B cell (primary cell): ENCODE measurements at regions of chr22 and their contacts with region 1.

Region 1: DNA sequence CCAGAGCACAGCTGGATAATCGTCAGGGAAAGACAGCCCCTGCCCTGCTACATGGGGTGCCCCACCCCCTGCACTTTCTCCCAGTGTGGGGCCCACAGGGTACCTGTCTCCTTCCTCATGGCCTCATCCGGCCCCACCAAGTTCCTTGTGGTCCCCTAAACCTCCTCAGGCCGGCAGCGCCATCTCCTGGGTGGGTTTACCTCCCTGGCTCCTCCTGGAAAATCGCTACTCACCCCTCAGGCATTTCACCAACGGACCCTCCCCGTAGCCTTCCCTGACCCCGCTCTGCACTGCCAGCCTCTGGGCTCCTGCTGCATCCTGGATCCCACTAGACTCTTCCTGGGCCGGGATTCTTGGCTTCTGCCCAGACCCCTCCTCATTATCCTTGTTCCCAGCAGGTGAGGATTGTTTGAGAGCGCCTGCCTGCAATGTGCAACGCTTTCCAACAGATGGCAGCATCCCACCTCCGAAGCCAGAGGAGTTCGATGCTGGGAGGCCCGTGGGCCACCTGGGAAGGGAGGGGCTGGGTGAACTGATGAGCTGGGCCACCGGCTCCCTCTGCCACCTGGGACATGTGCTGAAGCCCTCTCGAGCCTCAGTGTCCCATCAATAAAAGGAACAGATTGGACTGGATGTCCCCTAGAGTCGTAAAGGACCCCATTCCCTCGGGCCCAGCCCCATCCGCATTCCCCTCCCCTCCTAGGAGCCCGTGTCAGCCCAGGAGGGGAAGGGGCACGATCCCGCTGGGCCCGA is 44.2 kb upstream of the TTLL12 start:
- DNase-seq: peak; percentile 72
- ATAC-seq: peak; percentile 69
- H3K4me3 ChIP-seq: no peak overlapping the region
- H3K4me3 Mint-ChIP-seq: no peak overlapping the region
- H3K27ac ChIP-seq: no peak overlapping the region
- H3K27ac Mint-ChIP-seq: no peak overlapping the region
- H3K4me1 ChIP-seq: peaks cover 4 to 7% of the 10 kb centered on the region in 2 donors
- H3K4me1 Mint-ChIP-seq: peaks cover 4% of the 10 kb centered on the region
- H3K27me3 ChIP-seq: peaks cover 0 to 15% (median 0%) of the 10 kb centered on the region in 4 experiments
- H3K27me3 Mint-ChIP-seq: peaks cover 6% of the 10 kb centered on the region
- CTCF ChIP-seq: peak; percentile 98

Region 2: DNA sequence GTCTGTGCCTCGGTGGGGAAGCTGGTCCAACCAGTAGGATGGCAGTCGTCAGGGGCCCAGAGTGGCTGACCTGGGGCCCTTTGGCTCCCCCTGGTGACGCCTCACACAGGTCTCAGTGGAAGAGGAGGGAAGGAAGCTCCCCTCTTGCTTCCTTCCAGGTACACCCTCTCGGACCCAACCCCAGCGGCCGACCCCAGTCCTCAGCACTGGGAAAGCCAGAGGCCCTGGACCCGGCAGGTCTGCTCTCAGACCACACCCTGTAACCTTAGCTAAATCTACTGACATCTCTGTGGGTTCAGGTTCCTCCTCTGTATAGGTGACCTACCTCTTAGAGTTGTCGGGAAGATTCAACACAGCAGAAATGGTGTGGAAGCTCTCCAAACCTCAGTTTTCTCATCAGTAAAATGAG is 115.4 kb after region 1 on chr22:
- CTCF ChIA-PET with region 1: interaction called, 71 read pairs
- POLR2A ChIA-PET with region 1: no interaction called
- intact Hi-C with region 1: no loop called
- DNase-seq: peak; percentile 60
- ATAC-seq: no peak
- H3K4me3 ChIP-seq: no peak overlapping the region
- H3K4me3 Mint-ChIP-seq: no peak overlapping the region
- H3K27ac ChIP-seq: no peak overlapping the region
- H3K27ac Mint-ChIP-seq: no peak overlapping the region
- H3K4me1 ChIP-seq: peaks cover 0 to 9% of the 10 kb centered on the region in 2 donors
- H3K4me1 Mint-ChIP-seq: peaks cover 11% of the 10 kb centered on the region
- H3K27me3 ChIP-seq: peaks cover 0 to 48% (median 12%) of the 10 kb centered on the region in 4 experiments
- H3K27me3 Mint-ChIP-seq: peaks cover 64% of the 10 kb centered on the region
- CTCF ChIP-seq: peak; percentile 71

Region 3: DNA sequence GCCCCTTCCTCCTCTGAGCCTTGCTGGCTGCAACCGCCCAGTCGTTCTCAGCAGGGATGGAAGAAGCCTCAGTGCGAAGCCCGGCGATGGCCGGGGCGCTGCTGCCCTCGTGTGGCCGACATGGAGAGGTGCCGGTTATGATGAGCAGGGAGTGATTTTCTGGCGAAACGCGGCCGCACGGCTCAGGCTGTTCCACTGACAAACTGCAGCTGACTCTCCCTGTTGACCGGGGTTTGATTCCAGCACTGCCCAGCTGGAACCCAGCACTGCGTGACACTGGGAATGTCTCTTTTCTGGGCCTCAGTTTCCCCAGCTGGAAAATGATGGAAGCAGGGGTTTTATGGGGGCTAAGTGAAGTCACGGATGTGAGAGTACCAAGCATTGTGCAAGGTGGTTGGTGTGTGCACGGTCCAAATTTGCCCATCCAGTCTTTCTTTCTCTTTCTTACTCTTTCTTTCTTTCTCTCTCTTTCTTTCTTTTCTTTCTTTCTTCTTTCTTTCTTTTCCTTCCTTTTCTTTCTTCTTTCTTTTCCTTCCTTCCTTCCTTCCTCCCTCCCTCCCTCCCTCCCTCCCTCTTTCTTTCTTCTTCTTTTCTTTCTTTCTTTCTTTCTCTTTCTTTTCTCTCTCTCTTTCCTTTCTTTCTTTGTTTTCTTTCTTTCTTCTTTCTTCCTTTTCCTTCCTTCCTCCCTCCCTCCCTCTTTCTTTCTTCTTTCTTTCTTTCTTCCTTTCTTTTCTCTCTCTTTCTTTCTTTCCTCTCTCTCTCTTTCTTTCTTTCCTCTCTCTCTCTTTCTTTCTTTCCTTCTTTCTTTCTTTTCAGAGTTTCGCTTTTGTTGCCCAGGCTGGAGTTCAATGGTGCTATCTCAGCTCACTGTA is 154.9 kb after region 1 on chr22:
- CTCF ChIA-PET with region 1: interaction called, 11 read pairs
- POLR2A ChIA-PET with region 1: no interaction called
- intact Hi-C with region 1: no loop called
- DNase-seq: peak; percentile 76
- ATAC-seq: peak; percentile 81
- H3K4me3 ChIP-seq: no peak overlapping the region
- H3K4me3 Mint-ChIP-seq: no peak overlapping the region
- H3K27ac ChIP-seq: no peak overlapping the region
- H3K27ac Mint-ChIP-seq: peak overlapping the region; percentile 41
- H3K4me1 ChIP-seq: peaks cover 2 to 3% of the 10 kb centered on the region in 2 donors
- H3K4me1 Mint-ChIP-seq: peaks cover 3% of the 10 kb centered on the region
- H3K27me3 ChIP-seq: peaks cover 0 to 25% (median 6%) of the 10 kb centered on the region in 4 experiments
- H3K27me3 Mint-ChIP-seq: peaks cover 23% of the 10 kb centered on the region
- CTCF ChIP-seq: peak; percentile 82